Activated T-helper 2 cell treated with anti-CD3 and anti-CD28 coated beads, Interferon-gamma antibody, Interleukin-2, Interleukin-4, amounts not matched to agents 10 μg/mL and 5 μg/mL and 100 μg/mL, durations not matched to agents 14 hours and 24 hours and 36 hours (primary cell): ENCODE measurements at regions of chr4 and their contacts with region 1.

Region 1: DNA sequence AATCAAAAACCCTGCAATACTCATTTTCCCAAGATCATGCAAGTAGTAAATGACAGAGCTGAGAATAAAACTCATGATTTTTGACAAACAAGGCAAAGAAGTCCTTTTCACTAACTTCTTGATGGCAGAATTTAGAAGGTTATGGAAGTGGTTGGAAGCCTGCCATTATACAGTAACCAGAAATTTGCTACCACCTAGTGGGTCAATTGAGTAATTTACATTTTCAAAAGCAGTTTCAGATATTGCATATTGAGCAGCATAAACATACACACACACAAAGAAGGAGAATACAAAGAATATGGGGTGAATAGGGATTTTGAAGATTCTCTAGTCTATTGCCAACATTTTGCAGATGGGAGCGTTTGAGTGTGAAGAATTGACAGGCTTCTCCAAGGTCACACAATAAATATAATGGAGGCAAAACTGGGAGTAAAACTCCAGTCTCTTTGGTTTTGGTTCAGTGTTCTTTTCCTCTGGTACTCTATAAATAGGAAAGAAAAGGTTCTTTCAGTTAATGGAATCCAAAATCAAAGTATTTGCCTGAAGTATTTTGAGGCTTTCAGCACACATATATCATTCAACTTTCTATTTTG is 70.2 kb downstream of the GC start:
- DNase-seq: no peak
- H3K4me3 Mint-ChIP-seq: no peak overlapping the region
- H3K27ac Mint-ChIP-seq: no peak overlapping the region
- H3K4me1 Mint-ChIP-seq: no peaks in the 10 kb centered on the region
- H3K27me3 Mint-ChIP-seq: peaks cover 1% of the 10 kb centered on the region

Region 2: GRCh38 chr4:70601422-70602039 is 1112.2 kb before region 1 on chr4:
- intact Hi-C with region 1: loop called (anchors 5 kb)
- DNase-seq: peak; percentile 49
- H3K4me3 Mint-ChIP-seq: no peak overlapping the region
- H3K27ac Mint-ChIP-seq: no peak overlapping the region
- H3K4me1 Mint-ChIP-seq: no peaks in the 10 kb centered on the region
- H3K27me3 Mint-ChIP-seq: peaks cover 17% of the 10 kb centered on the region

Region 3: DNA sequence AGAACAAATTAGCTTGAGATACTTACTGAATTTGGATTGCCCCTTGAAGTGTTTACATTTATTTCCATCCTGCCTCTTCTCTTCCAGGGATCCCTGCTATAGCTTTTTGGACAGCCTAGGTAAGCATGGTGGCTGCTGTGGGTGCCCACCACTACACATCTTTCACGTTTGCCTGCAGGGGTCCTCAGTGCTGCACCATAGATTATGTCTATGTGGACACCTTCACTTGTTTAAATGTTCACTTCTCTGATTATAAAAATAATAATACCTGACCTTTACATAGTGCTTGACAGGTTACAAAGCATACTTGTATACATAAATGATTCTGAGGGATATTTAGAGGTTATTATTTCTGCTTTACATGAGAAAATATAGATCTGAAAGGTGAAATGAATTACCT is 442.8 kb before region 1 on chr4:
- intact Hi-C with region 1: loop called (anchors 5 kb)
- DNase-seq: no peak
- H3K4me3 Mint-ChIP-seq: no peak overlapping the region
- H3K27ac Mint-ChIP-seq: no peak overlapping the region
- H3K4me1 Mint-ChIP-seq: peaks cover 5% of the 10 kb centered on the region
- H3K27me3 Mint-ChIP-seq: no peaks in the 10 kb centered on the region